ENCODE measurements at regions of chr14 and their contacts with region 1.

Region 1: DNA sequence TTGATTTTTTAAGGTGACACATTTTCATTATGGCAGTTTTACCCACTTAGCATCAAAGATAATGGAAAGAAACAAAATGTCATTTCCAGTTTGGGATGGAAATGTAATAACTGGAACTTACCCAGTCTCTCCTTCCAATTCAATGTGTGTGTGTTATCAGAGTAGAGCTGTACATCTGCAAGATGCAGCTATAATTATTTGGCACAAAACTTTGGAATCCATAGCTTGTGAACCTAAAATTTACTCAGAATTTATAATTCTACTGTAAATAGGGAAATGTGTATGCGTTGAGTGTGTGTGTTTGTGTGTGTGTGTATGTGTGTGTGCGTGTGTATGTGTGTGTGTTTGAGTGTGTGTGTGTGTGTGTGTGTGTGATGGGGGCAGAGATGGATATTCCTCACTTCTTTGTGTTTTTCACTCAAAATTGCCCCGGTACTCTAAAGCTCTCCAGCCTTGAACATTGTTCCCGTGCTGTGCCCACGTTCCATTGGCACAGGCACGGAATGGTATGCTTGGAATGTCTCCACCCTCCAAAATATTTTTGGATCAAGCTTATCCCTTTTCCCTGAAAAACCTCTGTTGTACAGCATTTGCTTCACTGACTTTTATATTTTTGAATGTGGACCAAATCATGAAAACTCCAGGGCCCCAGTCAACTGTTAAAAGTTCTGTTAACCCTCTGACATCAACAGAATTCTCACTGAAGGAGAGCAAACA is 150.2 kb upstream of the BMP4 start:
- DNase-seq: peak; percentile 21
- H3K4me3 Mint-ChIP-seq: peak overlapping the region; percentile 58
- H3K27ac Mint-ChIP-seq: peak overlapping the region; percentile 97
- H3K4me1 Mint-ChIP-seq: peaks cover 42% of the 10 kb centered on the region
- H3K27me3 Mint-ChIP-seq: no peaks in the 10 kb centered on the region
- CTCF ChIP-seq: no peak

Region 2: DNA sequence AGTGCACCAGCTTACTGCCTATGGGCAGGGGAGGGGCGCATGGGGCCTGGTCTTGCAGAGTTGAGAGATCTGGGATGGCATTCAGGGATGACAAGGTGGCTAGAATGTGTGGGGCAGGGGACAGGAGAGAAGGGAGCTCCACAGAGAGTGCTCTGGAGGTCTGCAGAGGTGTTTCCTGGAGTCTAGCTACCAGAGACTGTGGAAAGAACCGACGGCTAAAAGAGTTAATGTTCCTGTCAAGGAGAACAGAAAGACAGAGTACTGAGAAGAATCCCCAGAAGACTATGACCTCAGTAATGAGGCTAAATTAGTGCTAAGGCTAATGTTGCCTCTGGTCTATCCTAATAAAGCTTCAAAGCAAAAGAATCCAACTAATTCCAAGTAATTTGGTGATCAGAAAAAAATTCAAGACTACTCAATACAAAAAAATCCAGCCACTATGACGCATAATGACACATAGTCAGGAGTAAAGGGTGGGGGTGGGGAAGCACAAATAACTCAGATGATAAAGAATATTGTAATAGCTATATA is 1200.7 kb before region 1 on chr14:
- CTCF ChIA-PET with region 1: no interaction called
- POLR2A ChIA-PET with region 1: no interaction called
- intact Hi-C with region 1: no loop called
- DNase-seq: peak; percentile 81
- H3K4me3 Mint-ChIP-seq: peak overlapping the region; percentile 44
- H3K27ac Mint-ChIP-seq: peak overlapping the region; percentile 77
- H3K4me1 Mint-ChIP-seq: peaks cover 54% of the 10 kb centered on the region
- H3K27me3 Mint-ChIP-seq: no peaks in the 10 kb centered on the region
- CTCF ChIP-seq: no peak

Region 3: GRCh38 chr14:53875324-53875897 is 231.4 kb before region 1 on chr14:
- CTCF ChIA-PET with region 1: no interaction called
- POLR2A ChIA-PET with region 1: no interaction called
- intact Hi-C with region 1: no loop called
- DNase-seq: no peak
- H3K4me3 Mint-ChIP-seq: no peak overlapping the region
- H3K27ac Mint-ChIP-seq: no peak overlapping the region
- H3K4me1 Mint-ChIP-seq: no peaks in the 10 kb centered on the region
- H3K27me3 Mint-ChIP-seq: no peaks in the 10 kb centered on the region
- CTCF ChIP-seq: no peak

Region 4: GRCh38 chr14:54094765-54095164 is 12.1 kb before region 1 on chr14:
- CTCF ChIA-PET with region 1: no interaction called
- POLR2A ChIA-PET with region 1: interaction called, 11 read pairs
- intact Hi-C with region 1: no loop called
- DNase-seq: no peak
- H3K4me3 Mint-ChIP-seq: no peak overlapping the region
- H3K27ac Mint-ChIP-seq: no peak overlapping the region
- H3K4me1 Mint-ChIP-seq: no peaks in the 10 kb centered on the region
- H3K27me3 Mint-ChIP-seq: no peaks in the 10 kb centered on the region
- CTCF ChIP-seq: no peak

Region 5: DNA sequence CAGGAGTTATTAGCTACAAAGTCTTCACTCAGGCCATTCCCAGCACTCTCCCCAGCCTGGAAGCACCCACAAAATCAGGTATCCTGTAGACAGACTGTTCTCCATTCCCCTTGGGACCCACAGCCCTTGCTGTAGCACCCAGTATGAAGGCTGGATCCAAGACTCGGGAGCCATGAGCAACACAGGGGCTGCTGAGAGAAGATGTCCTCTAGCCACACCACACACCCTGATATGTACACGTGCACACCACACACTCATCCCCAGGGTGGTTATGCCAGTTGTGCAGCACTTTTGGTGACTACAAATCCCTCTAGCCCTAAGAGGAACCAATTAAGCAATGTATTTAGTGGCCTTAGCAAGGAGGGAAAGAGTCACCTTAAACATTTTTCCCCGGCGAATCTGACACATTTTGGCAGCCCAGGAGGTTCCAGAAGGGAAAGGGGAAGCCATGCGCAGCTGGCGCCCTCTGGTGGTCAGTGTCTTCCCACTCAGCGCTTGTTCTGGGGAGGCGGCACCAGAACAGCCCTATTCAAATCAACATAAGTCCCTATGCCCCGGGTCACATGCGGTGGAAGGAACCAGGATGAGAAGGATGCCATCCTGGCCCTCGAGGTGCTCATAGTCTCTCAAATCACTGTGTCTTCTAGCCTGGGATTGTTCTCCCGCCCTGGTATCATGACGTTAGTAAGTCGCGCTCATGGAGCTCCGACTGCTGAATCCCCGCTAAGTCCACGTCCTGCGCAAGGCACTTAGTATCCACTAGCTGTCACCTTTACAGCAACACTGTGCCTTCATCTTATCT is 698.9 kb after region 1 on chr14:
- CTCF ChIA-PET with region 1: no interaction called
- POLR2A ChIA-PET with region 1: no interaction called
- intact Hi-C with region 1: no loop called
- DNase-seq: peak; percentile 86
- H3K4me3 Mint-ChIP-seq: no peak overlapping the region
- H3K27ac Mint-ChIP-seq: no peak overlapping the region
- H3K4me1 Mint-ChIP-seq: peaks cover 12% of the 10 kb centered on the region
- H3K27me3 Mint-ChIP-seq: peaks cover under 1% of the 10 kb centered on the region
- CTCF ChIP-seq: peak; percentile 91